Activated CD4-positive, alpha-beta memory T cell treated with anti-CD3 and anti-CD28 coated beads for 36 hours (primary cell): ENCODE measurements at regions of chr6 and their contacts with region 1.

Region 1: DNA sequence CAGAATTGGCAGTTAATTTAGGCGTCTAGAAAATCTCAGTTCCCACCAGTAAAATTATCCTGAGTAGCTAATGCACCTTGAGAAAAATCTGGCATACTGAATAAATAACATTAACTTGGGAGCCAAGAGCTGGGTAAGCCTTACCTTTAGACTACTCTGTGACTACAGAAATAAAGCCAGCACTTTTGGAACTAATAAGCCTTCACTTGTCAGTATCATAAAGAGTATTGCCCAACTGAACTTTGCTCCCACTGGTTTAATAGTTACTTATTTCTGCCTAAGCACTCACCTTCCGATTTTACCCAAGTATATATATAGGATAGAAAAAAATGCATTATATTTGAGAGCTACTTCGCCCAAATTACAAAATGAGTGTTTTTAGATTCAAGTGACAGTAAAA is 10.7 kb downstream of the FAM8A1 start:
- DNase-seq: no peak
- H3K4me3 Mint-ChIP-seq: no peak overlapping the region
- H3K27ac Mint-ChIP-seq: no peak overlapping the region
- H3K4me1 Mint-ChIP-seq: no peaks in the 10 kb centered on the region
- H3K27me3 Mint-ChIP-seq: no peaks in the 10 kb centered on the region

Region 2: GRCh38 chr6:16761471-16762267 is 849.2 kb before region 1 on chr6:
- CTCF ChIA-PET with region 1: no interaction called
- POLR2A ChIA-PET with region 1: no interaction called
- intact Hi-C with region 1: no loop called
- DNase-seq: peak; percentile 92
- H3K4me3 Mint-ChIP-seq: peak overlapping the region; percentile 94
- H3K27ac Mint-ChIP-seq: peak overlapping the region; percentile 93
- H3K4me1 Mint-ChIP-seq: peaks cover 58% of the 10 kb centered on the region
- H3K27me3 Mint-ChIP-seq: no peaks in the 10 kb centered on the region

Region 3: DNA sequence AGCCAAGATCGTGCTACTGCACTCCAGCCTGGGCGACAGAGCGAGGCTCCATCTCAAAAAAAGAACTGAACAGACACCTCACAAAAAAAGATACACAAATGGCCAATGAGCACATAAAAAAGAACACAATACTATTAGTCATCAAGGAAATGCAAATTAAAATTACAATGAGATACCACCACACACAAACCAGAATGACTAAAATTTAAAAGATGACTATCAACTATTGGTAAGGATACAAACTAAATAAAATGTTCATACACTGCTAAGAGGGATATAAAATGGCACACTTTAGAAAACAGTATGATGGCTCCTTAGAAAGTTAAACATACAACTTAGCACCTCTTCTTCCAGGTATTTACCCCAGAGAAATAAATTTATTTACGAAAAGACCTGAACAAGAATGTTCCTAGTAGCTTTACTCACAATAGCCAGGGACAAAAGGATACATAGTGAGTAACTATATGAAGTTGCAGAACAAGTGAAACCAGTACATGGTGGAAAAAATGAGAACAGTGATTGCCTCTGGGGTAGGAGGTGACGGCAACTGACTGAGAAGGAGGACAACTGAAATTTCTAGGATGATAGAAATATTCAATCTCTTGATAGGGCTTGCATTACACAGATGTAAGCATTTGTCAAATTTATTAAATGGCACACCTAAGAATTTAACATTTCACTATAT is 42.5 kb after region 1 on chr6:
- CTCF ChIA-PET with region 1: no interaction called
- POLR2A ChIA-PET with region 1: no interaction called
- intact Hi-C with region 1: loop called (anchors 5 kb)
- DNase-seq: no peak
- H3K4me3 Mint-ChIP-seq: no peak overlapping the region
- H3K27ac Mint-ChIP-seq: peak overlapping the region; percentile 72
- H3K4me1 Mint-ChIP-seq: peaks cover 31% of the 10 kb centered on the region
- H3K27me3 Mint-ChIP-seq: no peaks in the 10 kb centered on the region

Region 4: DNA sequence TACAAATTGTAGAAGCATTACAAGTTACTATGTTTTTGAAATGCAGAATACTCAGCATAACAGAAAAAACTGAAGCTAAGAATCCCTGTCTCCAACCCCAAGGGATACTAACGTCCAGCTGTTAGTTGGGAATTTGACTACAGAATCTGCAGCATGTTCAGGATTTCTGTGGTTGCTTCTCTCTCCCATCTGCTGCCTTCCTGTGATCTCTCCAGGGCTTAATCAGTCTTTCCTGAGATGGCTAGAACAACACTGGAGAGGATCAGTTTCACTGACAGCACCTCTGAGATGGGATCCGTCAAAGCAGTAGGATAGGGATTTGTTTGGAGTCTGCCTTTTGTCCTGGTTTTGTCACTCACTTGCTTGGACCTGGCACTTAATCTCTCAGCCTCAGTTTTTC is 169.2 kb after region 1 on chr6:
- CTCF ChIA-PET with region 1: no interaction called
- POLR2A ChIA-PET with region 1: no interaction called
- intact Hi-C with region 1: no loop called
- DNase-seq: no peak
- H3K4me3 Mint-ChIP-seq: no peak overlapping the region
- H3K27ac Mint-ChIP-seq: no peak overlapping the region
- H3K4me1 Mint-ChIP-seq: no peaks in the 10 kb centered on the region
- H3K27me3 Mint-ChIP-seq: no peaks in the 10 kb centered on the region

Region 5: GRCh38 chr6:17865798-17866725 is 255.2 kb after region 1 on chr6:
- CTCF ChIA-PET with region 1: no interaction called
- POLR2A ChIA-PET with region 1: no interaction called
- intact Hi-C with region 1: no loop called
- DNase-seq: no peak
- H3K4me3 Mint-ChIP-seq: no peak overlapping the region
- H3K27ac Mint-ChIP-seq: no peak overlapping the region
- H3K4me1 Mint-ChIP-seq: no peaks in the 10 kb centered on the region
- H3K27me3 Mint-ChIP-seq: peaks cover 7% of the 10 kb centered on the region